OCI-LY7 (cell line): ENCODE measurements at regions of chr9 and their contacts with region 1.

Region 1: DNA sequence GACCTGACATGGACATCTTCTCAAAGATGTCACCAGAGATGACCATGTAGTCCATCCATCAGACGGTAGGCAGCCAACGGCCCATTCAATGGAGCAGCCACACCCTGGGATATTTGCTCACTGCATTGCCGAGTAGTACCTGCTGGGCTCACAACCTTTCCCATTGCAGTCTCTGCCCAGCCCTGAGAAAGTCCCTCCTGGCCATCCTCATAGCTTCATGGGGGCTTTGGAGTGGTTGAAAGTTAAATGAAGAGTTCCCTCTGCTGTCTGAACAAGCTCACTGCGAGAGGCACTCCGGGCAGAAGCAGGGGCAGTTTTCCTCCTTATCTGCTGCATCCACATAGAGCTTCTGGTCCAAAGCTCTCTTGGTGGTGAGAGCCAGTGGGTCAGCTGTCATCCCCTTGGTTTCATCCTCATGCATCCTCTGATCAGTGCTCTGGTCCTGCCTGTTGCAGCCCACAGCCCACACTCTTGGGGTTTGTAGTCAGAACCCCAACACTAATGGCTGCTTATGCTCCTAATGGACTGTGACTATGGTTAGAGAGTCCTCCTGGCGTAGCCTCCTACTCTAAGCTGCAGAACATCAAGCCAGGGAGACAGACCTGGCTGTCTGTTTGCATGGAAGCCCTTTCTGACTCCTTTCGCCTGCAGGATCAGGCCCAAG is 23.4 kb downstream of the TNFSF8 start:
- DNase-seq: no peak
- H3K4me3 ChIP-seq: no peak overlapping the region
- H3K27ac ChIP-seq: no peak overlapping the region
- H3K4me1 ChIP-seq: peaks cover 89% of the 10 kb centered on the region
- CTCF ChIP-seq: peak; percentile 82

Region 2: DNA sequence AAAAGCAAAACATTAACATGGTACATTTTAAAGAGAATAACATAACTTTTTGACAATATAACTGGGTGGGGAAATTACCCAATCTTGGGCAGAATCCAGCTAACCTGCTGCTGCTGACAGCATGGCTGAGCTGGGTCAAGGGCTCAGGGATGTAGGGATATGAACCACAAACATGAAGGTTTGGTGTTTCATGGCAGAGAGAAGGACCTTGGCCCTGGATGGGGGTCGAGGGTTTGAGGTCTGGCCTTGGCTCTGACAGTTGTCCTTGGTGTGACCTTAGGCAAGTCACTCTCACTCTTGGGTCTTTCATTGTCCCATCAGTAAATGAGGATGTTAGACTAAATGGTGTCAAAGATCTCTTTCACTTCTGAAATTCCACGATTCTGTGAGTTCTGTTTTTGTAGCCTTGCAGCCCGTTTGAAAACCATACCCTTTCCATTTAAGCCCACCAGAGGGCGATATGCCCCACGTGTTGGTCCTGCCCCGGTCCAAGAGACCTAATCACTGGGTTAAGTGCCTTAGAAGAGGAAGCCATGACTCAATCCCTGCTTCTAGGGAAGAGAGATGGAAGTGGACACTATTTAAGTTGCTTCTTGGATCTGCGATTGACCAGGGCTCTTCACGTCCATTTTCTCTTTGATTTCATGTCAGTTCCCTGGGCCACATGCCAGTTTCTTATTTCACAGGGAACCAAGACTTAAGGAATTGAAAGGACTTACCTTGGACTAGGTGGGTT is 168.3 kb before region 1 on chr9:
- CTCF ChIA-PET with region 1: interaction called, 3 read pairs
- POLR2A ChIA-PET with region 1: no interaction called
- intact Hi-C with region 1: loop called (anchors 1 kb)
- DNase-seq: peak; percentile 78
- H3K4me3 ChIP-seq: no peak overlapping the region
- H3K27ac ChIP-seq: no peak overlapping the region
- H3K4me1 ChIP-seq: no peaks in the 10 kb centered on the region
- CTCF ChIP-seq: peak; percentile 98

Region 3: DNA sequence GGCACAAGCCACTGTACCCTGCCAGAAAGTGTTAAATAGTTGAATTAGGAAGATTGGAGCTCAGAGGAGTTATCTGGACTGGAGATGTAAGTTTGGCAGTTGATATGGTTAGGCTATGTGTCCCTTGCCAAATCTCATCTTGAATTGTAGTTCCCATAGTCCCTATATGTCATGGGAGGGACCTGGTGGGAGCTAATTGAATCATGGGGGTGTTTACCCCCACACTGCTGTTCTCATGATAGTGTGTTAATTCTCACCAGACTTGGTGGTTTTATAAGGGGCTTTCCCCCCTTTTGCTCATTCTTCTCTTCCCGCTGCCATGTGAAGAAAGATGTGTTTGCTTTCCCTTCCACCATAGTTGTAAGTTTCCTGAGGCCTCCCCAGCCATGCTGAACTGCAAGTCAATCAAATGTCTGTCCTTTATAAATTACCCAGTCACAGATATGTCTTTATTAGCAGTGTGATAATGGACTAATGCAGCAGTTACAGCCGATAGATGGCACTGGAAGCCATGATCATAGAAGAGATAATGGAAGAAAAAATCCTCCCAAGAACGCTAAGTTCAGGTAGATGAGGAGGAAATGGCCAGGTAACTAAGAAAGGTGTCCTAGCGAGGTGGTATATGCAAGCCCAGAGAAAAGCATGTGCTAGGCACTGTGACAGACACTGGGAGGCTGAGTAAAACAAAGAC is 28.0 kb before region 1 on chr9:
- CTCF ChIA-PET with region 1: interaction called, 3 read pairs
- POLR2A ChIA-PET with region 1: interaction called, 3 read pairs
- intact Hi-C with region 1: loop called (anchors 2 kb)
- DNase-seq: peak; percentile 44
- H3K4me3 ChIP-seq: no peak overlapping the region
- H3K27ac ChIP-seq: no peak overlapping the region
- H3K4me1 ChIP-seq: peaks cover 5% of the 10 kb centered on the region
- CTCF ChIP-seq: peak; percentile 72

Region 4: GRCh38 chr9:114919611-114920010 is 12.6 kb after region 1 on chr9:
- CTCF ChIA-PET with region 1: interaction called, 19 read pairs
- POLR2A ChIA-PET with region 1: interaction called, 61 read pairs
- intact Hi-C with region 1: no loop called
- DNase-seq: no peak
- H3K4me3 ChIP-seq: peak overlapping the region; percentile 3
- H3K27ac ChIP-seq: peak overlapping the region; percentile 44
- H3K4me1 ChIP-seq: peaks cover 80% of the 10 kb centered on the region
- CTCF ChIP-seq: no peak

Region 5: GRCh38 chr9:115024969-115025427 is 118.0 kb after region 1 on chr9:
- CTCF ChIA-PET with region 1: no interaction called
- POLR2A ChIA-PET with region 1: interaction called, 11 read pairs
- intact Hi-C with region 1: no loop called
- DNase-seq: no peak
- H3K4me3 ChIP-seq: no peak overlapping the region
- H3K27ac ChIP-seq: no peak overlapping the region
- H3K4me1 ChIP-seq: no peaks in the 10 kb centered on the region
- CTCF ChIP-seq: no peak